Endothelial cell of umbilical vein (primary cell): ENCODE measurements at regions of chr4 and their contacts with region 1.

Region 1: DNA sequence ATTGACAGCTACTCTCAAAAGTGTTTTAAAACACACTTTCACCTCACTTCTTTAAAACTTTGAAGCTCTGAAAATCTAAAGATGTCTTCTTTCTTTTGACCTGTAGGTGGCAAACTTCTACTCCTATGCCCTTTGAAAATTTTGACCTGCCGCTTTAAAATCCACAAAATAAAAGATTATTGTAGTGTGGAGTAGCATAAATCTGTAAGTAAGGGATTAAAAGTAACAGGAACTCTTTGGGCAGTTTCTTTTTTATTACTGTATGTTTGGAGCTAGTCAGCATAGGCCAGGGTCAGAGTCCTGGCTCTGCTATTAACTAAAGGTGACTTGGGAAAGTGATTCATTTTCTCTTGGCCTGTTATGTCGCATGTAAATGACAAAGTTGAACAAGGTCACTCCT is 25.5 kb downstream of the BBS12 start:
- DNase-seq: peak; percentile 65
- H3K4me3 ChIP-seq: no peak overlapping the region
- H3K27ac ChIP-seq: no peak overlapping the region
- H3K4me1 ChIP-seq: peaks cover 3% of the 10 kb centered on the region
- H3K27me3 ChIP-seq: no peaks in the 10 kb centered on the region
- CTCF ChIP-seq: peak; percentile 28 to 35
- POLR2A ChIP-seq: no peak

Region 2: DNA sequence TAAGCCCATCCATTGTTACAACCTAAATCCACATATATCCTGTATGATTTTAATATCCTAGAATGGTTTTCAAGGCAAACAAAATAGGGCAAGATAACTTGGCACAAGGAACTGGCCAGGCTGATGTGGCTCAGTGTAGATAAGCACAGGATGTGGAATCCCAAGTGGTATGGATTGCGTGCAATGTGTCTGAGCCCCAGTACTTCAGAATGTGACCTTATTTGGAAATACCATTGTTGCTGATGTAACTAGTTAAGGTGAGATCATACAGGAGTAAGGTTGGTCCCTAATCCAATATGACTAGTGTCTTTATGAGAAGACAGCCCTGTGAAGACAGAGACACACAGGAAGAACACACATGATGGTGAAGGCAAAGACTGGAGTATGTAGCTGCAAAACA is 209.6 kb before region 1 on chr4:
- CTCF ChIA-PET with region 1: no interaction called
- POLR2A ChIA-PET with region 1: no interaction called
- dilution Hi-C with region 1: no loop called
- intact Hi-C with region 1: no loop called
- DNase-seq: no peak
- H3K4me3 ChIP-seq: no peak overlapping the region
- H3K27ac ChIP-seq: no peak overlapping the region
- H3K4me1 ChIP-seq: no peaks in the 10 kb centered on the region
- H3K27me3 ChIP-seq: peaks cover 2 to 22% of the 10 kb centered on the region in 2 experiments
- CTCF ChIP-seq: no peak
- POLR2A ChIP-seq: no peak

Region 3: GRCh38 chr4:122783301-122784215 is 25.5 kb after region 1 on chr4:
- CTCF ChIA-PET with region 1: interaction called, 9 read pairs
- POLR2A ChIA-PET with region 1: no interaction called
- dilution Hi-C with region 1: no loop called
- intact Hi-C with region 1: loop called (anchors 1 kb)
- DNase-seq: peak; percentile 86
- H3K4me3 ChIP-seq: no peak overlapping the region
- H3K27ac ChIP-seq: peak overlapping the region; percentile 64
- H3K4me1 ChIP-seq: peaks cover 20% of the 10 kb centered on the region
- H3K27me3 ChIP-seq: no peaks in the 10 kb centered on the region
- CTCF ChIP-seq: no peak
- POLR2A ChIP-seq: peak; percentile 13

Region 4: DNA sequence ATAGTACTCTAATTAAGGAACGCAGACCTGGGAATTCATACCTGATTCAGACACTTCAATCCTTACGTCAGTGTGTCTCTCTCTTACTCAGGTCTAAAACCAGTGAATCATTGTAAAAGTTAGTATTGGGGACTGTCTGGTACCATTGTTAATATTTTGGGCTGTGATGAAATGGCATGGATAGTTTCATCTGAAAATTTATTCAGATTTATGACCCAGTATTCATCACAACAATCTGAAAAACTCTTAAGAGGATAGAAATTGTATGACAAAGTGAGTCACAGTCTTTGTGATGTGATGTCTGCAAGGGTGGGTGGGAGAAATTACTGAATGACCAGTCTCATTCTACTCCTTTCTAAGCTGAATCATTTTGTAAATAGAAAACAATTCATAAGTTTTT is 78.9 kb after region 1 on chr4:
- CTCF ChIA-PET with region 1: interaction called, 11 read pairs
- POLR2A ChIA-PET with region 1: no interaction called
- dilution Hi-C with region 1: no loop called
- intact Hi-C with region 1: no loop called
- DNase-seq: peak; percentile 46
- H3K4me3 ChIP-seq: no peak overlapping the region
- H3K27ac ChIP-seq: no peak overlapping the region
- H3K4me1 ChIP-seq: no peaks in the 10 kb centered on the region
- H3K27me3 ChIP-seq: no peaks in the 10 kb centered on the region
- CTCF ChIP-seq: no peak
- POLR2A ChIP-seq: no peak

Region 5: DNA sequence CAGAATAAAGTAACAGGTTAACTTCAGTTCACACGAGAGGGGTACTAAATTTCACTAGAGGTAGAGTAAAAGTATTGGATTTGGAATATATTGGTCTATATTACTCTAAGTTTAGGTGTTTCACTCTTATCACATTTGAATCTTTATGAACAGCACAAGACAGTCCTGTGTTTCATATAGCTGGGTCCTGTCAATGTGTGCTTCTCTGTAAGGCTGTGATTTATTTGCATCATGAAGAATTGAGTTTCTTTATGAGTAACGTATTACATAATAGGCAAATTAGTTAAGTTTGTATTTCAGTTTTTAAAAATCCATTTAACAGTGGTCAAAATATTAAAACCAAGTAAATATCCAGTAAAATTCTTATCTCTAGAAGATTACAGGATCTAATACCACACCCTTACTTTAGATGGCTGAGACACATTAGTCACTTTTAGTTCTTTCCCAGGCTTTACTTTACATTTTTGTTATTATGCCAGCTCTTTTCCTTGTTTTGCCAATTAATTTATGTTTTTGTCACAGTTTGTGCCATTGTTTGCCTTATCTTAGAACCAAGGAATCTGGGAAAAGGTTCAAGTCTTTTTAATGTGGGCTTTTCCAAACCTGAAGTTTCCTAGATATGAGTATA is 132.2 kb after region 1 on chr4:
- CTCF ChIA-PET with region 1: interaction called, 10 read pairs
- POLR2A ChIA-PET with region 1: no interaction called
- dilution Hi-C with region 1: no loop called
- intact Hi-C with region 1: no loop called
- DNase-seq: peak; percentile 92
- H3K4me3 ChIP-seq: no peak overlapping the region
- H3K27ac ChIP-seq: peak overlapping the region; percentile 66
- H3K4me1 ChIP-seq: peaks cover 26% of the 10 kb centered on the region
- H3K27me3 ChIP-seq: no peaks in the 10 kb centered on the region
- CTCF ChIP-seq: no peak
- POLR2A ChIP-seq: no peak

Region 6: DNA sequence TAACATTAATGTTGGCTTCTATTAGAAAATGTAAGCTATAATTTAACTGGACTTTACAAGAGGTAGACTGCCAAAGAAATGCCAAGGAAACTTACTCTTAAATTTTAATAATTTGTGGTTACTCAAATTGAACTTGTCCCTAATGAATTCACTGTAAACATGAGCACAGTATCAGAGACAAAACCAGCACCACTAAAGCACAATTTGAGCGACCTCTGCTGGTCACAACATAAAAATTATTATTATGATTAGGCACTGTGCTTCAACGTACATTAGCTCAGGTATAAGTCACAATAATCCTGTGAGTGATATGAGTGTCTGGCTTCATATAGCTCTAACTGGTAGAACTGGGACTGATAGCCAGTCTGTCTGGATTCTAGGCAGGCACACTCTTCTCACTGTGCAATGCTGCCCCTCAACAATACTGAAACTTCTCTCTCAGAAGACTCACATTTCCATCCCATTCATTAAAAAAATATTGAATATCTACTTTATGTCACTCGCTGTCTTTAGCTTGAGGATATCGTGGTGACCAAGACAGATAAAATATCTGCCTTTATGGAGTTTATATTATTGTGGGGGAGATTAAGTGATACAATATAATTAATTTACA is 156.4 kb after region 1 on chr4:
- CTCF ChIA-PET with region 1: interaction called, 183 read pairs
- POLR2A ChIA-PET with region 1: no interaction called
- dilution Hi-C with region 1: loop called (anchors 25 kb)
- intact Hi-C with region 1: loop called (anchors 1 kb)
- DNase-seq: peak; percentile 77
- H3K4me3 ChIP-seq: no peak overlapping the region
- H3K27ac ChIP-seq: no peak overlapping the region
- H3K4me1 ChIP-seq: peaks cover 4% of the 10 kb centered on the region
- H3K27me3 ChIP-seq: no peaks in the 10 kb centered on the region
- CTCF ChIP-seq: peak; percentile 27 to 30
- POLR2A ChIP-seq: no peak

Region 7: GRCh38 chr4:122930862-122931261 is 172.8 kb after region 1 on chr4:
- CTCF ChIA-PET with region 1: interaction called, 32 read pairs
- POLR2A ChIA-PET with region 1: no interaction called
- dilution Hi-C with region 1: no loop called
- intact Hi-C with region 1: no loop called
- DNase-seq: peak; percentile 40
- H3K4me3 ChIP-seq: no peak overlapping the region
- H3K27ac ChIP-seq: no peak overlapping the region
- H3K4me1 ChIP-seq: no peaks in the 10 kb centered on the region
- H3K27me3 ChIP-seq: no peaks in the 10 kb centered on the region
- CTCF ChIP-seq: peak in 1 of 2 donors; percentile 25
- POLR2A ChIP-seq: no peak